Naive thymus-derived CD8-positive, alpha-beta T cell (primary cell): ENCODE measurements at regions of chr2 and their contacts with region 1.

Region 1: DNA sequence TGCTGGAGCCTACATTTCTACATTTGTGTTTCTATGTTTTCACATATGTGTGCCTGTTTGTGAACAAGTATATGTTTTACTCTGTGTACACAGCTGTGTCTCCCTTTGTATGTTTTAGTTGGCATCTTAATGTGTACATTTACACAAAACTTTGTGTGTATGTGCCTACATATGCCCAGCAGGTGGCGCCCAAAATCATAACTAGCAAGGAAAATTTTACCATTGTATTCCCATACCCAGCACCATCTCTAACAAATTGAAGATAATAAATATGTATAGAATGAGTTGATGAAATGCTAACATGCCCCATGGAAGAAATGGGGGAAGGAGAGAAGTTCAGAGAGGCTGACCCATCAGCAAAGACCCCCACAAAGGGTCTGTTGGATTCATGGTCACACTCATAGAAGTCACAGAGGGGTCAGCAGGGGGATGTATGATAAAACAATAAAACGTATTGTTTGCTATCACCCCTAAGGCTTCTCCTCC is 48.1 kb downstream of the PKDCC start:
- DNase-seq: peak; percentile 58 to 88 (median 72)
- ATAC-seq: peak; percentile 58 to 68
- H3K4me3 Mint-ChIP-seq: no peak overlapping the region
- H3K27ac Mint-ChIP-seq: peak overlapping the region in 6 of 10 donors; percentile 11 to 54 (median 17)
- H3K4me1 Mint-ChIP-seq: peaks cover 22 to 62% (median 48%) of the 10 kb centered on the region in 4 donors
- H3K27me3 Mint-ChIP-seq: peaks cover 0 to 5% (median 0%) of the 10 kb centered on the region in 5 donors

Region 2: GRCh38 chr2:41972819-41973218 is 123.1 kb before region 1 on chr2:
- POLR2A ChIA-PET with region 1: no interaction called
- DNase-seq: no peak
- ATAC-seq: no peak
- H3K4me3 Mint-ChIP-seq: no peak overlapping the region
- H3K27ac Mint-ChIP-seq: no peak overlapping the region
- H3K4me1 Mint-ChIP-seq: peaks cover 0 to 2% (median 0%) of the 10 kb centered on the region in 4 donors
- H3K27me3 Mint-ChIP-seq: peaks cover 0 to 18% (median 4%) of the 10 kb centered on the region in 5 donors

Region 3: DNA sequence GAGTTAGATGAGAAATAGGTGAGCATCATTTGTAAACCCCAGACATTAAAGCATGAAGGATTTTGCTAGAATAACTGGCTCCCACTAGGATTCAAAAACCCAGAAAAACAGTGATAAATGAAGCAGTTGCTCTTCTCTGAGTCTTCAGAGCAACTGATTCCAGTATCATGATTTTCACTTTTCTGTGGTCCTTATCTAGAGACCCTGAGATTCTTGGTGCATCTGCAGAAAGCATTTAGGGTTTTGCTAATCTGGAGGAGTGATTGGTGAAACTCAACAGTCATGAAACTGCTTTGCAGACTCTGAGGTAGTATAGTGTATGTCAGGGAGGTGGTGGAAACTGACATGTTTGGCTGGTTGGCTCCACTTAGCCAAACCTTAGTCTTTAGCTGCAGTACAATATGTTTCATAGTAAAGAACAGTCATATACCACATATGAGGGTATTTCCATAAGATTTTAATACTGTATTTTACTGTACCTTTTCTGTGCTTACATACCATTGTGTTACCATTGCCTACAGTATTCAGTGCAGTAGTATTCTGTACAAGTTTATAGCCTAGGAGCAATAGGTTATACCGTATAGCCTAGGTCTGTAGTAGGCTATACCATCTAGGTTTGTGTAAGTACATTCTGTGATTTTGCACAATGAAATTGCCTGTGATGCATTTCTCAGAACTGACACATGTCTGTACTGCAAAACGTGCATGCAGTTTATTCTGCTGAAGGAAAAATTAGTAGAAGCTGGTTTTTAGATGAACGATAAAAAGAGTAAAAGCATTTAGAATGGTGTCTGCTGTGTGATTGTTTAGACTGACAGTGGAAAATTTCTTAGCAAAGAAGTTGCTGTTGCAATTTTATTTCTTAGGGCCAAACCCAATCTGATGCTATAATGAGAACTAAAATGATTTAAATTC is 96.9 kb after region 1 on chr2:
- POLR2A ChIA-PET with region 1: interaction called, 11 read pairs
- DNase-seq: no peak
- ATAC-seq: peak; percentile 37 to 46
- H3K4me3 Mint-ChIP-seq: peak overlapping the region in 8 of 10 donors; percentile 5 to 61 (median 34)
- H3K27ac Mint-ChIP-seq: peak overlapping the region in 9 of 10 donors; percentile 24 to 90 (median 73)
- H3K4me1 Mint-ChIP-seq: peaks cover 32 to 83% (median 62%) of the 10 kb centered on the region in 4 donors
- H3K27me3 Mint-ChIP-seq: no peaks in the 10 kb centered on the region